CD8-positive, alpha-beta T cell (primary cell): ENCODE measurements at regions of chr7 and their contacts with region 1.

Region 1: GRCh38 chr7:155796381-155797261 is 15.6 kb downstream of the SHH start:
- DNase-seq: peak; percentile 36 to 82 (median 64)
- ATAC-seq: peak; percentile 77
- H3K4me3 ChIP-seq: no peak overlapping the region
- H3K4me3 Mint-ChIP-seq: no peak overlapping the region
- H3K27ac ChIP-seq: no peak overlapping the region
- H3K27ac Mint-ChIP-seq: no peak overlapping the region
- H3K4me1 ChIP-seq: peaks cover 4% of the 10 kb centered on the region
- H3K4me1 Mint-ChIP-seq: peaks cover 9% of the 10 kb centered on the region
- H3K27me3 ChIP-seq: peaks cover 11% of the 10 kb centered on the region in 2 experiments
- H3K27me3 Mint-ChIP-seq: peaks cover 36% of the 10 kb centered on the region
- CTCF ChIP-seq: peak; percentile 85

Region 2: DNA sequence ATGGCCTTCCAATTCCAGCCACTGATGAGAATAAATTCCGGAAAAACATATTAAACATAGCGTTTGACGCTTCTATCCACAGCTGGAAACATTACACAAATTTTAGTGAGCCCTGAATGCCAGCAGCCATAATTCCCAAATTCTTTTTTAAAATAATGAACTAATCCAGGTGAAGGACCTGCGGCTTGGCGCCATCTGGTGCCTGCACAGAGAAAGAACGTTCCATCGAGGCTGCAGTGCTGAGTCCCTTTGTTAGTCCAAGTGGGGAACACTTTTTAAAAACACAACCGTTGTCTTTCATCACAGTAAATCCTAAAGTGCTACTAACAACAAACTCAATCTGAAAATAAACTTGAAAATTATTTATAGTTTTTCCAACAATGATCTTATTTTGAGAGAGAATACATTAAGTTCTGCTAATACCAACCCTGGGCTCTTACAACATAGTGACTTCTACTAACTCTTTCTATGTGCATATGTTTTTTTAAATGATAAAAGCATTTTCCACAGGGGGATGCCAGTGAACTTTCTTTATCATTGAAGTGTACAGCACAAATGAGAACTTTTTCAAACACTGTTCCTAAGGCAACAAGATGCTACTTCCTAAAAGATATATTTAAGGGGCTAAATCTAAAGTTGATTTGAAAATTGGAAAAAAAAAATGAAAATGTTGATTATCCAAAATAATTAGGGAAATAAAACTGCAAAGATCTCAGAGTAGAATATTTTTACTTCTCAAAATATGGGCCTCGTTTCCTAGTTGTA is 677.0 kb after region 1 on chr7:
- CTCF ChIA-PET with region 1: interaction called, 3 read pairs
- POLR2A ChIA-PET with region 1: no interaction called
- intact Hi-C with region 1: loop called (anchors 1 kb)
- DNase-seq: peak in 4 of 9 experiments; percentile 13 to 41 (median 22)
- ATAC-seq: no peak
- H3K4me3 ChIP-seq: no peak overlapping the region
- H3K4me3 Mint-ChIP-seq: no peak overlapping the region
- H3K27ac ChIP-seq: no peak overlapping the region
- H3K27ac Mint-ChIP-seq: no peak overlapping the region
- H3K4me1 ChIP-seq: no peaks in the 10 kb centered on the region
- H3K4me1 Mint-ChIP-seq: no peaks in the 10 kb centered on the region
- H3K27me3 ChIP-seq: no peaks in the 10 kb centered on the region
- H3K27me3 Mint-ChIP-seq: peaks cover 27% of the 10 kb centered on the region
- CTCF ChIP-seq: peak; percentile 37

Region 3: DNA sequence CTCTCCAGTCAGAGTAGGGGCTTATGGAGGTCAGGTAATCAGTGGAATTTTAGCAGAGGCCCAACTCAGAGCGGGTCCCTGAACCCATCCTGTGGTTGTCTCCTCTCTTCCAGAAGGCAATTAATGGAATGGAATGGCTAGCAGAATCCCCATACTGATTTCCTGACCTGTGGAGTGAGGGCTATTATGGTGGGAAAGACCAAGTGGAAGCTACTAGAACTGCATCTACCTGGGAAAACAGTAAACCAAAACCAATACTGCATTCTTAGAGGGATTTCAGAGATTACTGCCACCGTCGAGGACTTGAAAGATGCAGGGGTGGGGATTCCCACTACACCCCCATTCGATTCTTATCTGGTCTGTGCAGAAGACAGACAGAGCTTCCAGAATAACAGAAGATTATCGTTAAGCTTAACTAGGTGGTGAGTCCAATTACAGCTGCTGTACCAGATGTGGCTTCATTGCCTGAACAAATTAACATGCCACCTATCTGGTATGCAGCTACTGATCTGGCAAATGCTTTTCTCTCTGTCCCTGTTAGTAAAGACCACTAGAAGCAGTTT is 1023.2 kb after region 1 on chr7:
- CTCF ChIA-PET with region 1: interaction called, 3 read pairs
- POLR2A ChIA-PET with region 1: no interaction called
- intact Hi-C with region 1: loop called (anchors 2 to 5 kb)
- DNase-seq: no peak
- ATAC-seq: no peak
- H3K4me3 ChIP-seq: no peak overlapping the region
- H3K4me3 Mint-ChIP-seq: no peak overlapping the region
- H3K27ac ChIP-seq: no peak overlapping the region
- H3K27ac Mint-ChIP-seq: no peak overlapping the region
- H3K4me1 ChIP-seq: no peaks in the 10 kb centered on the region
- H3K4me1 Mint-ChIP-seq: no peaks in the 10 kb centered on the region
- H3K27me3 ChIP-seq: no peaks in the 10 kb centered on the region
- H3K27me3 Mint-ChIP-seq: no peaks in the 10 kb centered on the region
- CTCF ChIP-seq: no peak

Region 4: GRCh38 chr7:156827587-156828203 is 1031.1 kb after region 1 on chr7:
- CTCF ChIA-PET with region 1: interaction called, 3 read pairs
- POLR2A ChIA-PET with region 1: no interaction called
- intact Hi-C with region 1: loop called in 1 of 2 experiments (anchors 5 kb)
- DNase-seq: peak in 2 of 9 experiments; percentile 20 to 37
- ATAC-seq: no peak
- H3K4me3 ChIP-seq: no peak overlapping the region
- H3K4me3 Mint-ChIP-seq: no peak overlapping the region
- H3K27ac ChIP-seq: no peak overlapping the region
- H3K27ac Mint-ChIP-seq: no peak overlapping the region
- H3K4me1 ChIP-seq: no peaks in the 10 kb centered on the region
- H3K4me1 Mint-ChIP-seq: no peaks in the 10 kb centered on the region
- H3K27me3 ChIP-seq: no peaks in the 10 kb centered on the region
- H3K27me3 Mint-ChIP-seq: no peaks in the 10 kb centered on the region
- CTCF ChIP-seq: peak; percentile 68

Region 5: GRCh38 chr7:157273208-157274093 is 1476.8 kb after region 1 on chr7:
- CTCF ChIA-PET with region 1: no interaction called
- POLR2A ChIA-PET with region 1: no interaction called
- intact Hi-C with region 1: loop called in 1 of 2 experiments (anchors 5 kb)
- DNase-seq: peak; percentile 32 to 80 (median 62)
- ATAC-seq: peak; percentile 92
- H3K4me3 ChIP-seq: no peak overlapping the region
- H3K4me3 Mint-ChIP-seq: no peak overlapping the region
- H3K27ac ChIP-seq: peak overlapping the region in 1 of 2 experiments; percentile 8
- H3K27ac Mint-ChIP-seq: peak overlapping the region; percentile 72
- H3K4me1 ChIP-seq: peaks cover 21% of the 10 kb centered on the region
- H3K4me1 Mint-ChIP-seq: peaks cover 24% of the 10 kb centered on the region
- H3K27me3 ChIP-seq: peaks cover 0 to 3% of the 10 kb centered on the region in 2 experiments
- H3K27me3 Mint-ChIP-seq: peaks cover 2% of the 10 kb centered on the region
- CTCF ChIP-seq: peak; percentile 90